Left cardiac atrium (tissue), 4 donors: ENCODE measurements at regions of chr10 and their contacts with region 1.

Region 1: DNA sequence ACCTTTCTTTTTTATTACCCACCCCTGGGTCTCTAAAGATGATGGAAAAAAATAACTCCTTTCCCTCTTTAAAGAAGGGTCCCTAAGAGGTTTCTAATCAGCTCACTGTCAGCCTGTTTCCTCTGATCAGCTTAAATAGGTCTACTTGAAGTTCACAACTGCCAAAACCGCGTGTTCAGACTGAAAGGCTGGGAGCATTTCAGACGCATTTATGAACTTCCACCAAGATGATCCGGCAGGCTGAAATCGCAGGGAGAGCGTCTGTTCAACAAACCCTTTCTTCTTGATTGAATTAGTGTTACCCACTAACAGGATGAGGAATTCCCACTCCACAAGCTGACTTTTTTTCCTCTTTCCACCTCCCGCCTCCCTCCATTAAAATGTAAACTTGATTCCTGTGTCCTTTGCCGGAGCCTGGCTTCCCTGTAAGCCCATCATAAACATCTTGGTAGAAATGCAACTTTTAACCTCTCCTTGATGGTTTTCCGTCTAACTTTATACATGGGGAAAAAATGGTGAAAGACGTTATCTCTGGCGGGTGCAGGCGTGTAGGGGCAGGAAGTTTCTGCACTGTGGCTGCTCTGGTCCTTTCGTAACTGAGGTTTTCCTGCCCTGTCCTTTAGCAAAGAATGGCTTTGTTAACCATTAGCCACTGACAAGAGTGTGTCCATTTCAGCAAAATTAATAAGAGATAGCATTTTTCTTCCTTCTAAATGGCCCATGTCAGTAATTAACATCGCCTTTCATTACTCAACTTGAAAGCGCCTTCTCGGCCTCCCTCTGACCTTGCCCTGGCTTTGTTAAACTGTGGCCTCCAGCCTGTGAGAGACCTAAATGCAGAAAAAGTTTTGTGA is 130.7 kb downstream of the BAMBI start:
- DNase-seq: no peak
- ATAC-seq: peak; percentile 47 to 60

Region 2: GRCh38 chr10:28676968-28677887 is 130.8 kb before region 1 on chr10 and contains the start of gene BAMBI:
- intact Hi-C with region 1: loop called in 1 of 2 experiments (anchors 5 kb)
- DNase-seq: peak; percentile 93
- ATAC-seq: peak; percentile 98
- total RNA-seq, gene BAMBI: 23.7 to 54.8 TPM

Region 3: GRCh38 chr10:28951484-28951883 is 143.5 kb after region 1 on chr10:
- intact Hi-C with region 1: no loop called
- DNase-seq: no peak
- ATAC-seq: no peak

Region 4: DNA sequence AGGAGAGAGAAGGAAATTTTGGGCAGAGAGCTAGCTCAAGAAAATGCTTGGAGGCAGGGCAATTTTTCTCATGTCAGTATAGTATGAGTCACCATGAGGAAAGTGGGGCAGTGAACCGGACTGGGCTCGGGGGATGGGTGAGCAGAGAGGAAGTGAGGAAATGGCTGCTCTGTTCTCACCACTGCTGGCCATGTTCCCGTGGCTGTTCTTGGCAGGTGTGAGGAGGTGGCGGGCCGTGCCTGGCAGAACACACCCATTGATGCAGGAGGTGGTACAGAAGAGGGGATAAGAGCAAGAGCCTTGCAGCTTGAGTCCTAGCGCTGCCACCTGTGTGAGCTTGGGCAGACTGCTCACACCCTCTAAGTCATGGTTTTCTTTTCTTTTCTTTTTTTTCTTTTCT is 176.4 kb after region 1 on chr10:
- intact Hi-C with region 1: loop called in 1 of 2 experiments (anchors 10 kb)
- DNase-seq: peak; percentile 94
- ATAC-seq: peak; percentile 95 to 98